Activated naive CD4-positive, alpha-beta T cell treated with anti-CD3 and anti-CD28 coated beads for 36 hours (primary cell): ENCODE measurements at regions of chr15 and their contacts with region 1.

Region 1: GRCh38 chr15:101206176-101206591 is 45.7 kb downstream of the CHSY1 start:
- DNase-seq: peak; percentile 89
- H3K4me3 Mint-ChIP-seq: peak overlapping the region; percentile 72
- H3K27ac Mint-ChIP-seq: peak overlapping the region; percentile 92
- H3K4me1 Mint-ChIP-seq: peaks cover 83% of the 10 kb centered on the region
- H3K27me3 Mint-ChIP-seq: no peaks in the 10 kb centered on the region

Region 2: DNA sequence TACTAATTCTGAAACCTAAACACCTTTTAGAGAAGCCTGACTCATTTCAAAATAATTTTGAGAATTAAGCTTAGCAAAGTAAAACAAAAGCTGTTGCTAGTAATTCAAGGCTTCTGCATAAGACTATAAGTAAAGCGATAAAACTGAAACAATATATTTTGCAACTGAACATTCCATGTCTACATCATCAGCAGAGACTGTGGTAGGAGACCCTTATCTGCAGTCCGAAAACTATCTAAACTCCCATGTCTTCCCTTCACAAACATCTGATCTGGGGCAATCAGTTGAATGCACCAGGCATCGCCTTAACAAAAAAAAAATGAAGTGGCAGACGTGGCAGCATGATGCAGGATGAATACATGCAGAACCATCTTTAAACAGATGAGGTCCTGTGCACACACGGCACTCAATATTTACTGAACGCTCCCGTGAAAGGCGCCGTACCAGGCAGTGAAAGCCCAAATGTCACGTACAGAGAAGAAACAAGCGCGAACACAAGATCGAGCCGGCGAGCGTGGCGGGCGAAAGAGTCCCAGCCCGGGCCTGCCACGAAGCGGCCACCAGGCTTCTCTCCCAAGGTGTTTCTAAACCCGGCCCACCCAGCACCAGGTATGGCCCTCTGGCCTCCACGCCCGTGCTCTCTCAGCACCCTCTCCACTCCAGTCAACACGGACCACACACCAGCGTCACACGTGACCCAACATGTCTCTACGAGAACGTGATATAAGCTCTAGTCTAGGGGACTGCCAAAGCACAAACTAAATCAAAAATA is 17.4 kb before region 1 on chr15:
- CTCF ChIA-PET with region 1: interaction called, 5 read pairs
- intact Hi-C with region 1: loop called (anchors 1 kb)
- DNase-seq: no peak
- H3K4me3 Mint-ChIP-seq: peak overlapping the region; percentile 1
- H3K27ac Mint-ChIP-seq: peak overlapping the region; percentile 73
- H3K4me1 Mint-ChIP-seq: peaks cover 75% of the 10 kb centered on the region
- H3K27me3 Mint-ChIP-seq: no peaks in the 10 kb centered on the region